Endothelial cell of umbilical vein (primary cell): ENCODE measurements at regions of chr15 and their contacts with region 1.

Region 1: GRCh38 chr15:99059010-99059981 is 45.6 kb upstream of the SYNM start:
- DNase-seq: peak; percentile 61
- H3K4me3 ChIP-seq: peak overlapping the region; percentile 34 to 60 (median 40)
- H3K27ac ChIP-seq: peak overlapping the region; percentile 12
- H3K4me1 ChIP-seq: peaks cover 8% of the 10 kb centered on the region
- H3K27me3 ChIP-seq: peaks cover 0 to 5% of the 10 kb centered on the region in 2 experiments
- CTCF ChIP-seq: peak; percentile 56 to 85
- POLR2A ChIP-seq: no peak

Region 2: DNA sequence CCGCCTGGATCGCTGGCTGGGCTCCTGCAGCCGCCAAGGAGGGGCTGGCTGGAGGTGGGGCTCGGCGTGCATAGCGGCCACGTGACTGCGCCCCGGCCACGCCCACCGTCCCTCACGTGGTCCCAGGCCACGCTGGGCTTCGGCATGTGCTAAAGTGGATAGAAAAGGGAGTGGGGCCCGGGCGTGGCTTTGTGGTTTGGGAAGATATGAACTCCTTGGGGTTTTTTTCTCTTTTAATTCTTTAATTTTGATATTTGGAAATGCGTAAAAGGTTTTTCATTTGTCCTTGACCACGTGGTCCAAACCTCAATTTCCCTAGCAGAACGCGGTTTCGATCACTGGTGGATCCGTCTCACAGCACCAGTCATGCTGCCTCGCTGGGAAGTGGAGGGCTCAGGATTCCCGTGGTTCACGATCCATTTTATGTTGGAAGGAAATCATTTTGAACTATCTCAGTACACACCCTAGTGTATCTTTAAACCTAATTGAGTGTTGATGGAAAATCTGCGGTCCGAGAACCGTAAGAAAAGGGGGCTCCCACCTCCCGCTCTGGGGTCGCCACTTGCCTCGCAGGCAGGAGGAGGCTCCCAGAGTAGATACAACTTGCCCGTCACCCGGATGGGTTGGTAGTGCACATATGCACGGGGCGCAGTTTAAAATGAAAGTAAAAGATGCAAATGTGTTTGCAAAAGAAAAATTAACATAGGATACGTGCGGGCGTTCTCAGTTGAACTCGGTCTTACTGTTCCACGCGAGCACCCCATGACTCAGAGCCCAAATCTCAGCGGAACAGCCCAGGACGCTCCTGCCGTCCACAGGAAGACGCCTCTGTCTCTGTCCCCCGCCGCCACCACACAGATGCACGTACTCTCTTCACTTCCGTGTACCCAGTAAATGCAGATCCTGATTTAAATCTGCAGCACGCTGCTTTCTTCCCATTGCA is 193.6 kb before region 1 on chr15:
- CTCF ChIA-PET with region 1: interaction called, 9 read pairs
- POLR2A ChIA-PET with region 1: no interaction called
- dilution Hi-C with region 1: no loop called
- intact Hi-C with region 1: loop called (anchors 5 kb)
- DNase-seq: peak; percentile 68
- H3K4me3 ChIP-seq: peak overlapping the region; percentile 25 to 78 (median 44)
- H3K27ac ChIP-seq: peak overlapping the region; percentile 78
- H3K4me1 ChIP-seq: peaks cover 4% of the 10 kb centered on the region
- H3K27me3 ChIP-seq: no peaks in the 10 kb centered on the region
- CTCF ChIP-seq: no peak
- POLR2A ChIP-seq: peak; percentile 23

Region 3: GRCh38 chr15:99070208-99070607 is 10.9 kb after region 1 on chr15:
- CTCF ChIA-PET with region 1: interaction called, 79 read pairs
- POLR2A ChIA-PET with region 1: no interaction called
- dilution Hi-C with region 1: no loop called
- intact Hi-C with region 1: no loop called
- DNase-seq: no peak
- H3K4me3 ChIP-seq: no peak overlapping the region
- H3K27ac ChIP-seq: no peak overlapping the region
- H3K4me1 ChIP-seq: no peaks in the 10 kb centered on the region
- H3K27me3 ChIP-seq: peaks cover 0 to 1% of the 10 kb centered on the region in 2 experiments
- CTCF ChIP-seq: no peak
- POLR2A ChIP-seq: no peak